Activated naive CD4-positive, alpha-beta T cell treated with anti-CD3 and anti-CD28 coated beads for 36 hours (primary cell): ENCODE measurements at regions of chr1 and their contacts with region 1.

Region 1: GRCh38 chr1:236759252-236759859 is 35.7 kb upstream of the MTR start:
- DNase-seq: peak; percentile 7
- H3K4me3 Mint-ChIP-seq: no peak overlapping the region
- H3K27ac Mint-ChIP-seq: no peak overlapping the region
- H3K4me1 Mint-ChIP-seq: no peaks in the 10 kb centered on the region
- H3K27me3 Mint-ChIP-seq: no peaks in the 10 kb centered on the region

Region 2: DNA sequence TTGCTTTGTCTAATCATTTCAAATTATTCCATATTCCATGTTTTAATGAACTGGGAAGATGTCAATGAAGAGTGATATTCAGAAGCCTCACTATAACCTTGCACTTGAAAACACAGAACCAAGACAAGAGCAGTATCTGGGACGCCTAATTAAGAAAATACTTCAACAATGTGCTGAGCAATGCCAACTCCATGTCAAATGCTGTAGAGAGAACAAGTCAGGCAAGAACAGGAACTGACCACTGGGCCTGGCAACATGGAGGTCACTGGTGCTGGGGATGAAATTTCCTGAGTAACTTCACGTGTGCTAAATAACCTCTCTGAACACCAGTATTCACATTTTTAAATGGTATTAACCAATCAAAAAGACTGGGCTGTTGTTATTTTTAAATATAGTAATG is 177.8 kb before region 1 on chr1:
- CTCF ChIA-PET with region 1: no interaction called
- intact Hi-C with region 1: no loop called
- DNase-seq: no peak
- H3K4me3 Mint-ChIP-seq: no peak overlapping the region
- H3K27ac Mint-ChIP-seq: no peak overlapping the region
- H3K4me1 Mint-ChIP-seq: no peaks in the 10 kb centered on the region
- H3K27me3 Mint-ChIP-seq: no peaks in the 10 kb centered on the region

Region 3: GRCh38 chr1:236741753-236742152 is 17.6 kb before region 1 on chr1:
- CTCF ChIA-PET with region 1: interaction called, 10 read pairs
- intact Hi-C with region 1: no loop called
- DNase-seq: no peak
- H3K4me3 Mint-ChIP-seq: no peak overlapping the region
- H3K27ac Mint-ChIP-seq: no peak overlapping the region
- H3K4me1 Mint-ChIP-seq: no peaks in the 10 kb centered on the region
- H3K27me3 Mint-ChIP-seq: no peaks in the 10 kb centered on the region

Region 4: GRCh38 chr1:236795035-236795756 is 35.8 kb after region 1 on chr1 and contains the start of gene MTR:
- CTCF ChIA-PET with region 1: interaction called, 12 read pairs
- intact Hi-C with region 1: loop called (anchors 1 kb)
- DNase-seq: peak; percentile 98
- H3K4me3 Mint-ChIP-seq: peak within 1 kb of the TSS; percentile 80
- H3K27ac Mint-ChIP-seq: peak within 1 kb of the TSS; percentile 86
- H3K4me1 Mint-ChIP-seq: peaks cover 27% of the 10 kb centered on the region
- H3K27me3 Mint-ChIP-seq: no peaks in the 10 kb centered on the region
- total RNA-seq, gene MTR: 55.3 to 57.6 TPM

Region 5: GRCh38 chr1:237041795-237042525 is 282.6 kb after region 1 on chr1 and contains the start of gene RYR2:
- CTCF ChIA-PET with region 1: no interaction called
- intact Hi-C with region 1: loop called (anchors 10 kb)
- DNase-seq: peak; percentile 8
- H3K4me3 Mint-ChIP-seq: peak within 1 kb of the TSS; percentile 3
- H3K27ac Mint-ChIP-seq: no peak within 1 kb of the TSS
- H3K4me1 Mint-ChIP-seq: peaks cover 12% of the 10 kb centered on the region
- H3K27me3 Mint-ChIP-seq: peaks cover 47% of the 10 kb centered on the region
- total RNA-seq, gene RYR2: not detected

Region 6: DNA sequence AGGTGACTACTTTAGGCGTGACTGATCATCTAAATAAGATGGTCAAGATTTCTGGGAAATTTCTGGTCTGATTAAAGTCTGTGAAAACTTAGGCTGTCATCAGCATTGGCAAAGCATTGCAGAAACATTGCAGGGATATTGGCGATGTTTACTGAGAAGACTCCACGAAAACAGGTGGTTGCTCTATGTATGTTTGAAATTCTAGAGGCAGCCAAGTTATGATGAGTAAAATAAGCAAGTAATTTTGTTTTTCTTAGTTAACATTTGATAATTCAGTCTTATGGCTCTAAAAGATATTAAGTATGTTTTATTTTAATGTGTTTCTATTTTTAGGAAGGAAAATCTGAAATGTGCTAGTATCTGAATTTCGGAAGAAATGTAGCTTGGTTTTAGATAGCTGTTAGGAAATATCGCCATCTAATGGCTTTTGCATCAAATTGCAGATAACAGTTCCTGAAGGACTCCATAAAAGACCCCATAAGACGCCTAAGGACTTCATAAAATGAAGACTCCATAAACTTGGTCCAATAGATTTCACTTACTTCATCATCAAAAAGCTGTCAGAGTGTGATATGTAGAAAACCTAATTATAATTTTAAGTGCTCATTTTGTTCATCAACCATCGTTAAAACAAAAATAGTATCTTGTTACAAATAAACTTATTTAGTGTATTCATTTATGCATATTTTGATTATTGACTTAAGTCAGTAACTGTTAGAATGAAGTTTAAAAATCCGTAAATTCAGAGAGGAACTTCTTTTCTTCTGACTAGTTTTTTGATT is 627.2 kb after region 1 on chr1:
- CTCF ChIA-PET with region 1: interaction called, 7 read pairs
- intact Hi-C with region 1: loop called (anchors 1 kb)
- DNase-seq: no peak
- H3K4me3 Mint-ChIP-seq: no peak overlapping the region
- H3K27ac Mint-ChIP-seq: no peak overlapping the region
- H3K4me1 Mint-ChIP-seq: no peaks in the 10 kb centered on the region
- H3K27me3 Mint-ChIP-seq: peaks cover 6% of the 10 kb centered on the region